Activated B cell treated with CpG ODN at 0.5 μM for 24 hours (primary cell): ENCODE measurements at regions of chr11 and their contacts with region 1.

Region 1: GRCh38 chr11:116835791-116836631 is 1.4 kb downstream of the APOA1 start:
- DNase-seq: peak; percentile 59
- ATAC-seq: peak; percentile 87
- H3K4me3 Mint-ChIP-seq: peak overlapping the region; percentile 75
- H3K27ac Mint-ChIP-seq: no peak overlapping the region
- H3K4me1 Mint-ChIP-seq: peaks cover 13% of the 10 kb centered on the region
- H3K27me3 Mint-ChIP-seq: peaks cover 2% of the 10 kb centered on the region
- CTCF ChIP-seq: no peak

Region 2: DNA sequence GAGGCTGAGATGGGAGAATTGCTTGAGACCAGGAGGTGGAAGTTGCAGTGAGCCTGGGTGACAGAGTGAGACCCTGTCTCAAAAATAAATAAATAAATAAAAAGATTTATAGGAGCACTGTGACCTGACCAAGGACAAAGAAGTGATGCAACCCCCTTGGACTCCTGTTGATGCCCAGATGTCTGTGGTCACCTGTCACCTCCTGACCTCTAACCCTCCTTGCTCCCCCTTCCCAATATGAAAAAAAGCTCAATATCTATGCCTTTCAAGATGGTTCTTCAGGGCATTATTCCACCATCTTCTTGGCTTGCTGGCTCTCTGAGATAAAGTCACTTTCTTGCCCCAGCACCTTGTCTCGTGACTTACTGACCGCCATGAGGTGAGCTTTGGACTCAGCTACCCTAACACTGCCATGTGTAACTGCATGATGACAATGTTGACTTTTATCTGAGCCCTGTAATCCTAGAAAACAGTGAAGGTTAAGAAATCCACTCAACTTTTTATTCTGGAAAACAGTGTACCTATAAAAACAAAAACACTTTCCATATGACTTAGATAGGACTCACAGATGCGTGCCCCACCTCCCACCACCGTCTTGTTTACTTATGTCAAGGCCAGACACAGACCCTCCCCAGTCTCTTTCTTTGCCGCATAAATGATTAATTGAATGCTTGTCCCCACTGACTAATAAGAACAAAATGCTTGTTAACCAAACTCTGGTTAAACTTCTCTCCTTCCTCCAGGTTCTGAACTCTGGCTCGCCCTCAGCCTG is 423.7 kb before region 1 on chr11:
- CTCF ChIA-PET with region 1: no interaction called
- POLR2A ChIA-PET with region 1: no interaction called
- intact Hi-C with region 1: no loop called
- DNase-seq: no peak
- ATAC-seq: no peak
- H3K4me3 Mint-ChIP-seq: no peak overlapping the region
- H3K27ac Mint-ChIP-seq: no peak overlapping the region
- H3K4me1 Mint-ChIP-seq: no peaks in the 10 kb centered on the region
- H3K27me3 Mint-ChIP-seq: peaks cover 3% of the 10 kb centered on the region
- CTCF ChIP-seq: no peak

Region 3: DNA sequence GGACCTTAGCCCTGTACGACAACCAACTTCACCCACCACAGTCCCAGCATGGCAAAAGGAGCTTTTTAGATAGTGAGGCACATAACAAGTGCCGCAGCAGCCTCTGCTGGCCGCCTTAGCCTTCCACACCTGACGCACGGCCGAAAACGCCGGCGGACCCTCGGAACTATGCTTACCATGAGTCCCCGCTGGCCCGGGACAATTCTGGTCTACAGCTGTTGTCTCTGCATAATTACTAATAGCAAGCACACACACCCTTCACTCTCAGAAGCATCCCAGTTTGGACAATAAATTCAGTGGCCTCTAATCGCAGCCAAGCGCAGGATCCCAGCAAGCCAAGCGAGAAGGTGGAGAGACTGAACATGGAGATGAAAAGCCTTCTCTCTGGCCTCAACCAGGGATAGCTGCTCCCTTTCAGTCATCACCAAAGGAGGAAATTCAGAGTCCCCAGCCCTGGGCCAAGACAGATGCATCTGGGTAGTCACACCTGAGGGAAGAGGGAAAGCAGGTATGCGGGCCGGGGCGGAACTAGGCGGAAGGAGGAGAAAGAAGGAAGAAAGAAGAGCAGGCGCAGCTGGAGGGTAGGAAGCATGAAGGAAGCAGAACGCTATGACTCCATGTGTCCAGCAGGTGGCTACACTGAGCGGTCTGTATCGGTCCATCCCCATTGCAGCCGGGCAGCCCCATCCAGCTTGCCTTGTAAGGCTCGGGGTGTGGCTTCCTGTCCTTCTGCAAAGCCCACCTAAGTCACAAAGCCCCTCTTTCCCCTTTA is 103.6 kb before region 1 on chr11:
- CTCF ChIA-PET with region 1: interaction called, 7 read pairs
- POLR2A ChIA-PET with region 1: no interaction called
- intact Hi-C with region 1: loop called (anchors 2 kb)
- DNase-seq: peak; percentile 40
- ATAC-seq: peak; percentile 97
- H3K4me3 Mint-ChIP-seq: peak overlapping the region; percentile 53
- H3K27ac Mint-ChIP-seq: no peak overlapping the region
- H3K4me1 Mint-ChIP-seq: peaks cover 17% of the 10 kb centered on the region
- H3K27me3 Mint-ChIP-seq: peaks cover 5% of the 10 kb centered on the region
- CTCF ChIP-seq: no peak

Region 4: GRCh38 chr11:116742104-116742503 is 93.9 kb before region 1 on chr11:
- CTCF ChIA-PET with region 1: interaction called, 13 read pairs
- POLR2A ChIA-PET with region 1: no interaction called
- intact Hi-C with region 1: no loop called
- DNase-seq: no peak
- ATAC-seq: no peak
- H3K4me3 Mint-ChIP-seq: no peak overlapping the region
- H3K27ac Mint-ChIP-seq: no peak overlapping the region
- H3K4me1 Mint-ChIP-seq: no peaks in the 10 kb centered on the region
- H3K27me3 Mint-ChIP-seq: no peaks in the 10 kb centered on the region
- CTCF ChIP-seq: no peak

Region 5: GRCh38 chr11:116772443-116773202 is 63.4 kb before region 1 on chr11 and contains the start of gene BUD13:
- CTCF ChIA-PET with region 1: no interaction called
- POLR2A ChIA-PET with region 1: interaction called, 6 read pairs
- intact Hi-C with region 1: loop called (anchors 1 kb)
- DNase-seq: peak; percentile 96
- ATAC-seq: peak; percentile 89
- H3K4me3 Mint-ChIP-seq: peak within 1 kb of the TSS; percentile 98
- H3K27ac Mint-ChIP-seq: peak within 1 kb of the TSS; percentile 96
- H3K4me1 Mint-ChIP-seq: peaks cover 37% of the 10 kb centered on the region
- H3K27me3 Mint-ChIP-seq: no peaks in the 10 kb centered on the region
- CTCF ChIP-seq: no peak
- total RNA-seq, gene BUD13: 18.4 and 18.8 TPM in 2 replicates

Region 6: GRCh38 chr11:116853461-116854073 is 17.6 kb after region 1 on chr11:
- CTCF ChIA-PET with region 1: interaction called, 15 read pairs
- POLR2A ChIA-PET with region 1: interaction called, 4 read pairs
- intact Hi-C with region 1: loop called (anchors 2 kb)
- DNase-seq: no peak
- ATAC-seq: peak; percentile 96
- H3K4me3 Mint-ChIP-seq: peak overlapping the region; percentile 39
- H3K27ac Mint-ChIP-seq: peak overlapping the region; percentile 16
- H3K4me1 Mint-ChIP-seq: peaks cover 55% of the 10 kb centered on the region
- H3K27me3 Mint-ChIP-seq: no peaks in the 10 kb centered on the region
- CTCF ChIP-seq: no peak

Region 7: DNA sequence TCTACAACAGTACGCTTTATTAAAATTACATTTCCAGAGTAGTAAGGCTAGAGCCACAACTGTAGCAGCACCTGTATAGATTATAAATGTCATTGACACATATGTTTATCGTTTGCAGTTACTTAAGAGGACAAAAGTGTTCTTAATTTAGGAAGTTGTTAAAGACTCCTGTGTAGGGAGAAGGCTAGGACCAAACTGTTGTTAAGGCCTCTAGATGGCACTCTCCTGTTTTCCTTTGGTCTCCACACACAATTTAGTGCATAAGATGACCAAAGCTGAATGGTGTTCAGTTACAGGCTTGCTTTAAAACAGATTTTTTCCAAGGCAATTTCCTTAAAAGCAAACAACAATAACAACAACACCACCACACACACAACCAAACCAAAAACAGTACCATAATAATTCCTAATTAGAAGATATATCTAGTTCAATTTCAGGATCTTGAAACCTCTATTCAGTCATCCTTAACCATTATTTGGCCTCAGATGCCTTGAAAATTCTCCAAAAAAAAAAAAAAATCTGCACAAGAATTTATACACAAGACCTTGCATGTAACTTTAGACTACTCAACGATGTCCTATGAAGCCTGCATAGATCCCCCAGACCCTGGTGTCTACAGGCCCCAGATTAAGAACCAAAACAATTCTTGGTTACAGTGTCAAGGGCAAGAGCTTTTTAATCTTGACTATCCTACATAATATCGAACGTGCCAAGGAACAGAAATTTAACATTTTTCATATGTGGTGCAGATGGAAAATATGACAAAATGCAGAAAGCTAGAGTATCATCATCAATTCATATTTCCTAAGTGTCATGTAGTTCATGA is 44.0 kb after region 1 on chr11:
- CTCF ChIA-PET with region 1: no interaction called
- POLR2A ChIA-PET with region 1: no interaction called
- intact Hi-C with region 1: no loop called
- DNase-seq: no peak
- ATAC-seq: peak; percentile 72
- H3K4me3 Mint-ChIP-seq: no peak overlapping the region
- H3K27ac Mint-ChIP-seq: no peak overlapping the region
- H3K4me1 Mint-ChIP-seq: peaks cover 9% of the 10 kb centered on the region
- H3K27me3 Mint-ChIP-seq: no peaks in the 10 kb centered on the region
- CTCF ChIP-seq: no peak

Region 8: DNA sequence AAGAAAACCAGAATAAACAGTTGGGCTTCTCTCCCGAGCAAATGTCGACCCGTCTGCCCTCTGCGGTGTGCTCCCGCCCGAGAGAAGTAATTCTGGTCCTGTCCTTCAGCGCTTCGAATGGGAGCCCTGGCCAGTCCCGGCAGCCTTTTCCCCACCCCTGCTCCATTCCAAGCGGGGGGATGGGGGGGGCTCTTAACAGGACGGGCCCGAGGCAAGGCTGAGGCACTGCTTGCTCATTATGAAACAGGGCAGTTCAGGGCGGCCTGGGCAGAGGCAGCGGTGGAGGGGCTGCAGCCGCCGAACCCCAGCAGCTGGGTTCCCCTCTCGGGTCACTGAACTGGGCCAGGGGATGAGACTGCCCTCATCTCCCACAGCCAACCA is 464.3 kb after region 1 on chr11:
- CTCF ChIA-PET with region 1: no interaction called
- POLR2A ChIA-PET with region 1: no interaction called
- intact Hi-C with region 1: no loop called
- DNase-seq: no peak
- ATAC-seq: no peak
- H3K4me3 Mint-ChIP-seq: no peak overlapping the region
- H3K27ac Mint-ChIP-seq: no peak overlapping the region
- H3K4me1 Mint-ChIP-seq: no peaks in the 10 kb centered on the region
- H3K27me3 Mint-ChIP-seq: peaks cover 4% of the 10 kb centered on the region
- CTCF ChIP-seq: no peak